Tibial artery (tissue), 4 donors: ENCODE measurements at regions of chr20 and their contacts with region 1.

Region 1: GRCh38 chr20:375265-375889 is 5.2 kb upstream of the TRIB3 start:
- DNase-seq: no peak
- H3K4me3 ChIP-seq: no peak overlapping the region
- H3K27ac ChIP-seq: no peak overlapping the region
- H3K4me1 ChIP-seq: peaks cover 0 to 9% (median 0%) of the 10 kb centered on the region in 4 donors
- H3K27me3 ChIP-seq: no peaks in the 10 kb centered on the region
- CTCF ChIP-seq: no peak

Region 2: DNA sequence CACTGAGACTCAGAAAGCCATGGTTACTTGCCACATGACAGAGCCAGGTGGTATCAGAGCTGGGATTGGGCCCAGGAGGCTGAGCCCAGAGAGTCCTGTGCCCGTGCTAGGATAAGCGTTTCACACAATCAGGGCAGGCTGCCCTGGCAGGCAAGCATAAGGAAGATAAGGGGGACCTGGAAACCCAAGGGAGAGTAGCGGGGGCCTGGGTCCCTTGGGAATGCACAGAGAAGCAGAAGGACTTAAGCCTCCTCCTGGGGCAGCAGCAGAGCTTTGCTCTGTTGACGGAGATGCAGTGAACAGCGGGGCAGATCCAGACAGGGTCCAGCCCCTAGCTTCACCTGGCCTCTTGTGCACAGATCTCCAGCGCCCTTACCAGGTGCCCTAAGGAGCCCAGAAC is 13.8 kb after region 1 on chr20:
- intact Hi-C with region 1: loop called (anchors 1 kb)
- DNase-seq: no peak
- H3K4me3 ChIP-seq: no peak overlapping the region
- H3K27ac ChIP-seq: no peak overlapping the region
- H3K4me1 ChIP-seq: no peaks in the 10 kb centered on the region
- H3K27me3 ChIP-seq: no peaks in the 10 kb centered on the region
- CTCF ChIP-seq: no peak

Region 3: DNA sequence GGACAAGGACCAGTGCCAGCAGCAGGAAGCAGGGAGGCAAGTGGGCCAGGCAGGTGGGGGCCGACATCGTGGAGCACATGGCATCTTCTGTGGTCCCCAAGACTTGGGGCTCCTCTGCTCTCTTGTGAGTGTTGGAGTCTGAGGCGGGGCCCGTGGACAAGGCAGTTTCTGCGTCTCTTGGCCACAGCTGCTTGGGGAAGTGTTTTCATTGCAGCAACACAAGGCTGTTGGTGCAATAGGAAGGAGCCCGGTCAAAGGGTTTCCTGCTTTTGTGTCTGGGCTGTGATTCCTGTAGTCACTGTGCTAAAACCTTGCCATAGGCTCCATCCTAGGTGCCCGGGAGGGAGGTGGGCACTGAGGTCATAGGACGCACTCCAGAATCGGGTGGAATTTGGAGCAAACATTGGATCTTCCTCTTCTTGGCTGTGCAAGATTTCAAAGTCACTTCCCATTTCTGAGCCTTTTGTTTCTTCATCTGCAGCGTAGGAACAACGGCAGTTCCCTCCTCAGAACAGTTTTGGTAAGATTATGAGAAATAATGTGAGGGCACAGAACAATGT is 1116.0 kb after region 1 on chr20 and contains the start of gene SIRPB2:
- intact Hi-C with region 1: no loop called
- DNase-seq: peak; percentile 69 to 80
- H3K4me3 ChIP-seq: peak within 1 kb of the TSS; percentile 28 to 32
- H3K27ac ChIP-seq: no peak within 1 kb of the TSS
- H3K4me1 ChIP-seq: no peaks in the 10 kb centered on the region
- H3K27me3 ChIP-seq: peaks cover 0 to 4% of the 10 kb centered on the region in 2 donors
- CTCF ChIP-seq: no peak